RWPE1 (cell line): ENCODE measurements at regions of chr20 and their contacts with region 1.

Region 1: DNA sequence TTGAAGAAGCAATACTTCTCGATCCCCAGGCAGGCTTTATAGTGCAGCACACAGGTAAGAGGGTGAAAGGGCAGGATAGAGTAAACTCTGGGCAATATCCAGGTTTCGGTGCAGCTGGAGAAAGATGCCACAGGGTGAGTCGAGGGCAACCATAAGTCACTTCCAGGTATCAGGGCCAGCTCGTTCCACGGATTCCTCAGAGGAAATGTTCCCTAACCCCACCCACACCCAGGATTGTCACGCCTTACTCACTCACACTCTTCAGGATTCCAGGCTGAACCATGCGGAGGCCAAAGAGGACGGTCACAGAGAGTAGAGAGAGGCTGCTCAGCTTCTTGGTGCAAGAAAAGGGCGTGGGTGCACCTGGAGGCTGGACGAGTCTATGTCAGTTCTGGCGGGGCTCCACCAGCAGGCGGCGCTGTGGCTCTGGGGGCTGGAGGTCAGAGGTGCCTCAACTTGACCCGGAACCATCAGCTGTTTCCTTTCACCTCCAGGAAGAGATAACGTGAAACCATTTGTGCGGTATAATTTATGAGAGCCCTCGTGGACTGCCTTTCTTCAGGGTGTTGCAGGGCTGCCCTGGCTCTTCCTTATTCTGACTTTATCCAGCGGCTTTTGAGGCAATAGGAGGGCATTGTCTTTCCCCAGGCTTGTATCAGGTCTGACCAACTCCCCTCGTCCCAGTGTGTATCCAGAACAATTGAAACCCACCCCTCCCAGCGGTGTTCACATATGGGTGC is 14.5 kb upstream of the WFDC12 start:
- DNase-seq: peak; percentile 80
- H3K27ac ChIP-seq: no peak overlapping the region
- CTCF ChIP-seq: peak; percentile 88

Region 2: GRCh38 chr20:45095753-45096371 is 42.9 kb before region 1 on chr20:
- CTCF ChIA-PET with region 1: interaction called, 23 read pairs
- POLR2A ChIA-PET with region 1: no interaction called
- DNase-seq: peak; percentile 83
- H3K27ac ChIP-seq: no peak overlapping the region
- CTCF ChIP-seq: peak; percentile 98

Region 3: DNA sequence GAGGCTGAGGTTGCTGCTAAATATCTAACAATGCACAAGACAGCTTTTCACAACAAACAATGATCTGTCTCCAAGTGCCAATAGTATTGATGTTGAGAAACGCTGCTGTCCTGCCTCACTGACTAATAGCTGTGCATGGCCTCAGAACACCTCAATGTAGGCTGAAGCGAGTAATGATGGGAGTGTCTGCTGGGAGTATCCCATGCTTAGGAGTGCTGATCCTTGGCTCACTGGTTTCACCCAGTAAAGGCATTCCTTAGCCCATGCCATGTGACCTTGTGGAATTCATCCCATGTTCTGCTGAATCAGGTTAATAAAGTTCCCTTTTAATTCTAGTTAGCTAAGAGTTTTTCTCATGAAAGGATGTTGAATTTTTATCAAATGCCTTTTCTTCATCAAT is 10.7 kb before region 1 on chr20:
- CTCF ChIA-PET with region 1: interaction called, 19 read pairs
- POLR2A ChIA-PET with region 1: no interaction called
- DNase-seq: peak; percentile 80
- H3K27ac ChIP-seq: no peak overlapping the region
- CTCF ChIP-seq: no peak

Region 4: GRCh38 chr20:45163083-45163803 is 24.5 kb after region 1 on chr20:
- CTCF ChIA-PET with region 1: interaction called, 15 read pairs
- POLR2A ChIA-PET with region 1: interaction called, 3 read pairs
- DNase-seq: no peak
- H3K27ac ChIP-seq: no peak overlapping the region
- CTCF ChIP-seq: no peak

Region 5: GRCh38 chr20:45300961-45301360 is 162.2 kb after region 1 on chr20:
- CTCF ChIA-PET with region 1: interaction called, 13 read pairs
- POLR2A ChIA-PET with region 1: no interaction called
- DNase-seq: peak; percentile 46
- H3K27ac ChIP-seq: no peak overlapping the region
- CTCF ChIP-seq: no peak; the same call in 1 of the 2 replicates